GM23248 (cell line): ENCODE measurements at regions of chr17 and their contacts with region 1.

Region 1: GRCh38 chr17:44199553-44200477 is at the start of gene ATXN7L3:
- DNase-seq: peak; percentile 100
- H3K4me3 ChIP-seq: peak within 1 kb of the TSS; percentile 89
- H3K27ac ChIP-seq: peak within 1 kb of the TSS; percentile 88
- H3K4me1 ChIP-seq: peaks cover 24% of the 10 kb centered on the region
- H3K27me3 ChIP-seq: no peaks in the 10 kb centered on the region
- total RNA-seq, gene ATXN7L3: 48.2 and 60.4 TPM in 2 replicates

Region 2: DNA sequence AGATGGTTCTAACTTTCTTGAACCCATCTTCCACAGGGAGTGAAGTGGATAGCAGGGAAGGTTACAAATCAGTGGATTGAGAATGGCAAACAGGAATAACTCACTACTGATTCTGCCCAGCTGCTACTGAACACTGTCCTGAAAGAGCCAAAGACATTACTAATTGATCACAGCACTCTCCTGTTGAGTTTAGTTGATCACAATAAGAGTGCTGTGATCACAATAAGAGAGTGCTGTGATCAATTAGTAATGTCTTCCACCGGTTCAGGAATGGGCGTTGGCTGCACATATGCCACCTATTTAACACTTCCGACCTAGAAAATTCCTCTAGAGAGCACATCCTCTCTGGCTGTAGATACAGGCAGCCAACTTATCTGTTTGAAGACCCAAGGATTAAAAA is 408.2 kb before region 1 on chr17:
- in situ Hi-C with region 1: no loop called
- DNase-seq: peak; percentile 51
- H3K4me3 ChIP-seq: no peak overlapping the region
- H3K27ac ChIP-seq: no peak overlapping the region
- H3K4me1 ChIP-seq: no peaks in the 10 kb centered on the region
- H3K27me3 ChIP-seq: peaks cover 19% of the 10 kb centered on the region; the same call in 1 of the 2 replicates

Region 3: DNA sequence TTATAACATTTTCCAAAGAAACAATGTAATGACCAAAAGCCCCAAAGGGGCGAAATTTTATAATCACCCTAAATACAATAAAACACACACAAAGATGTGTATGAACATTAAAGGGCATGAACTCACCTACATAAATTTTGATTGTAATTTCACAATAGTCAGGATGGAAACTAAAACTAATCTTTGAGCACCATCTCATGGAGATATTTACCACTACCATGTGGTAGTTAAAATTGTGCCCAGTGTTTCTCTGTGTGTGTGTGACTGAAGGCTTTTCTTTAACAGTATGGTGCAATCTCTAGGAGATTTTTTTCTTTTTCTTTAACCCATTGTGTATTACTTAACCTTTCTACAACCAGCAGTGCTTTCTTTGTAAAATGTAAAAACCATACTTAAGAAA is 436.7 kb after region 1 on chr17:
- in situ Hi-C with region 1: loop called (anchors 25 kb)
- DNase-seq: peak; percentile 75
- H3K4me3 ChIP-seq: no peak overlapping the region
- H3K27ac ChIP-seq: no peak overlapping the region
- H3K4me1 ChIP-seq: no peaks in the 10 kb centered on the region
- H3K27me3 ChIP-seq: no peaks in the 10 kb centered on the region